ENCODE measurements at regions of chr10 and their contacts with region 1.

Region 1: DNA sequence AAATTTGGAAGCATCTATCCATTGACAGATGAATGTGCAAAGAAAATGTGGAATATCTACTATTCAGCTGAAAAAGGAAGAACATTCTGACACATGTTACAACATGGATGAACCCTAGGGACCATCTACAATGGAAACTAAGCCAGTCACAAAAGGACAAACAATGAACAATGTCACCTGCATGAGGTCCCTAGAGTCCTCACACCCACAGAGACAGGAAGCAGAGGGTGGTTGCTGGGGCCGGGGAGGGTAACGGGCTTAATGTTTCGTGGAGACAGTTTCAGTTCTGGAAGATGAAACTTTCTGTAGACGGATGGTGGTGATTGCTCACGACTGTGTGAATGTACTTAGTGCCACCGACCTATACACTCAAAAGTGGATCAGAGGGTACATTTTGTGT is 282.9 kb downstream of the ADARB2 start:
- DNase-seq: peak; percentile 46
- ATAC-seq: peak; percentile 96
- H3K4me3 Mint-ChIP-seq: peak overlapping the region; percentile 49
- H3K27ac Mint-ChIP-seq: peak overlapping the region; percentile 70
- H3K4me1 Mint-ChIP-seq: peaks cover 52% of the 10 kb centered on the region
- H3K27me3 Mint-ChIP-seq: no peaks in the 10 kb centered on the region
- CTCF ChIP-seq: no peak

Region 2: GRCh38 chr10:1048732-1049424 is 405.6 kb before region 1 on chr10 and contains the start of gene IDI1:
- CTCF ChIA-PET with region 1: no interaction called
- POLR2A ChIA-PET with region 1: no interaction called
- intact Hi-C with region 1: loop called (anchors 10 kb)
- DNase-seq: peak; percentile 96
- ATAC-seq: peak; percentile 77
- H3K4me3 Mint-ChIP-seq: peak within 1 kb of the TSS; percentile 94
- H3K27ac Mint-ChIP-seq: peak within 1 kb of the TSS; percentile 98
- H3K4me1 Mint-ChIP-seq: peaks cover 71% of the 10 kb centered on the region
- H3K27me3 Mint-ChIP-seq: no peaks in the 10 kb centered on the region
- CTCF ChIP-seq: no peak
- total RNA-seq, gene IDI1: 75.8 and 79.8 TPM in 2 replicates

Region 3: GRCh38 chr10:1425879-1426278 is 28.5 kb before region 1 on chr10:
- CTCF ChIA-PET with region 1: interaction called, 3 read pairs
- POLR2A ChIA-PET with region 1: interaction called, 3 read pairs
- intact Hi-C with region 1: loop called (anchors 2 kb)
- DNase-seq: no peak
- ATAC-seq: peak; percentile 71
- H3K4me3 Mint-ChIP-seq: peak overlapping the region; percentile 42
- H3K27ac Mint-ChIP-seq: peak overlapping the region; percentile 77
- H3K4me1 Mint-ChIP-seq: peaks cover 65% of the 10 kb centered on the region
- H3K27me3 Mint-ChIP-seq: peaks cover 2% of the 10 kb centered on the region
- CTCF ChIP-seq: no peak

Region 4: GRCh38 chr10:1643161-1643907 is 188.9 kb after region 1 on chr10:
- CTCF ChIA-PET with region 1: no interaction called
- POLR2A ChIA-PET with region 1: no interaction called
- intact Hi-C with region 1: loop called (anchors 1 kb)
- DNase-seq: no peak
- ATAC-seq: peak; percentile 87
- H3K4me3 Mint-ChIP-seq: peak overlapping the region; percentile 17
- H3K27ac Mint-ChIP-seq: peak overlapping the region; percentile 14
- H3K4me1 Mint-ChIP-seq: peaks cover 10% of the 10 kb centered on the region
- H3K27me3 Mint-ChIP-seq: peaks cover 12% of the 10 kb centered on the region
- CTCF ChIP-seq: no peak

Measured in activated B cell treated with CpG ODN at 0.5 μM for 24 hours (primary cell).